ENCODE measurements at regions of chr2 and their contacts with region 1.

Region 1: GRCh38 chr2:15412779-15413178 is 148.4 kb downstream of the NBAS start:
- DNase-seq: no peak
- ATAC-seq: peak in 4 of 8 donors; percentile 24 to 85 (median 49)
- H3K4me3 ChIP-seq: no peak overlapping the region
- H3K27ac ChIP-seq: no peak overlapping the region
- H3K4me1 ChIP-seq: no peaks in the 10 kb centered on the region
- H3K27me3 ChIP-seq: no peaks in the 10 kb centered on the region
- CTCF ChIP-seq: no peak

Region 2: GRCh38 chr2:15271941-15272542 is 140.7 kb before region 1 on chr2:
- intact Hi-C with region 1: no loop called
- DNase-seq: no peak
- ATAC-seq: no peak
- H3K4me3 ChIP-seq: no peak overlapping the region
- H3K27ac ChIP-seq: no peak overlapping the region
- H3K4me1 ChIP-seq: no peaks in the 10 kb centered on the region
- H3K27me3 ChIP-seq: no peaks in the 10 kb centered on the region
- CTCF ChIP-seq: no peak

Region 3: DNA sequence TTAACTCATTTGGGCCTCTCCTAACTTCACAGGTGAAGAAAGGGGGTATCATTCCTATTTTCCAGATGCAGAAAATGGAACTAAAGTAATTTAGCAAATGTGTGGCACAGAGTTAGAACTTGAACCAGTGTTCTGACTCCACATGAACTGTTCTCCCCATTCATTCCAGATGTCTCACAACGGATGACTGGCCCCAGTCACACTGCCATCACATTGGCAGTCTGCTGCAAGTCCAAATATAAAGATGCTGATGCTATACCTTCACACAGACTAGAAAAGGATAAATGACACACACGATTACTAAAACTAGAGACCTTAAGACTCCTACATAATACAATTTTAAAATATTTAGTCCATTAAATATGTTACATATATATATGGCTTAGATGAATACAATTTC is 47.4 kb before region 1 on chr2:
- intact Hi-C with region 1: loop called in 1 of 10 experiments (anchors 1 kb)
- DNase-seq: no peak
- ATAC-seq: peak in 1 of 8 donors; percentile 46
- H3K4me3 ChIP-seq: no peak overlapping the region
- H3K27ac ChIP-seq: no peak overlapping the region
- H3K4me1 ChIP-seq: no peaks in the 10 kb centered on the region
- H3K27me3 ChIP-seq: no peaks in the 10 kb centered on the region
- CTCF ChIP-seq: no peak

Region 4: GRCh38 chr2:15577071-15577735 is 164.4 kb after region 1 on chr2:
- intact Hi-C with region 1: loop called in 1 of 10 experiments (anchors 10 kb)
- DNase-seq: peak; percentile 71 to 86
- ATAC-seq: peak; percentile 74 to 93 (median 88)
- H3K4me3 ChIP-seq: no peak overlapping the region
- H3K27ac ChIP-seq: no peak overlapping the region
- H3K4me1 ChIP-seq: peaks cover 0 to 4% (median 0%) of the 10 kb centered on the region in 9 donors
- H3K27me3 ChIP-seq: no peaks in the 10 kb centered on the region
- CTCF ChIP-seq: peak; percentile 39 to 83 (median 76)

Measured in heart right ventricle (tissue), 16 donors.